ENCODE measurements at regions of chr12 and their contacts with region 1.

Region 1: GRCh38 chr12:122265931-122266771 is at the start of gene VPS33A:
- DNase-seq: peak; percentile 97
- H3K4me3 ChIP-seq: peak within 1 kb of the TSS; percentile 48 to 86 (median 66)
- H3K27ac ChIP-seq: peak within 1 kb of the TSS; percentile 59
- H3K4me1 ChIP-seq: peaks cover 12% of the 10 kb centered on the region
- H3K27me3 ChIP-seq: no peaks in the 10 kb centered on the region
- CTCF ChIP-seq: no peak
- POLR2A ChIP-seq: peak; percentile 91
- total RNA-seq, gene VPS33A: 22.4 and 23.1 TPM in 2 replicates

Region 2: GRCh38 chr12:122225683-122226407 is 40.3 kb before region 1 on chr12 and contains the start of gene DIABLO:
- CTCF ChIA-PET with region 1: interaction called, 3 read pairs
- POLR2A ChIA-PET with region 1: no interaction called
- dilution Hi-C with region 1: no loop called
- intact Hi-C with region 1: loop called (anchors 1 kb)
- DNase-seq: peak; percentile 100
- H3K4me3 ChIP-seq: peak within 1 kb of the TSS; percentile 71 to 100 (median 80)
- H3K27ac ChIP-seq: peak within 1 kb of the TSS; percentile 90
- H3K4me1 ChIP-seq: peaks cover 10% of the 10 kb centered on the region
- H3K27me3 ChIP-seq: no peaks in the 10 kb centered on the region
- CTCF ChIP-seq: no peak
- POLR2A ChIP-seq: peak; percentile 85
- total RNA-seq, gene DIABLO: 48.4 and 49.9 TPM in 2 replicates

Measured in endothelial cell of umbilical vein (primary cell).